ENCODE measurements at regions of chr12 and their contacts with region 1.

Region 1: GRCh38 chr12:7933255-7933729 is 2.7 kb downstream of the SLC2A3 start:
- DNase-seq: peak; percentile 87
- H3K27ac ChIP-seq: no peak overlapping the region
- CTCF ChIP-seq: peak; percentile 32

Region 2: GRCh38 chr12:7995266-7995963 is 62.1 kb after region 1 on chr12:
- CTCF ChIA-PET with region 1: interaction called, 17 read pairs
- POLR2A ChIA-PET with region 1: no interaction called
- DNase-seq: peak; percentile 55
- H3K27ac ChIP-seq: no peak overlapping the region
- CTCF ChIP-seq: peak; percentile 66